ENCODE measurements at regions of chr18 and their contacts with region 1.

Region 1: GRCh38 chr18:36572135-36572856 is 256.5 kb downstream of the TPGS2 start:
- DNase-seq: peak in 1 of 3 donors; percentile 82
- ATAC-seq: peak; percentile 69
- H3K4me3 ChIP-seq: no peak overlapping the region
- H3K4me1 ChIP-seq: peaks cover 4% of the 10 kb centered on the region
- CTCF ChIP-seq: no peak

Region 2: DNA sequence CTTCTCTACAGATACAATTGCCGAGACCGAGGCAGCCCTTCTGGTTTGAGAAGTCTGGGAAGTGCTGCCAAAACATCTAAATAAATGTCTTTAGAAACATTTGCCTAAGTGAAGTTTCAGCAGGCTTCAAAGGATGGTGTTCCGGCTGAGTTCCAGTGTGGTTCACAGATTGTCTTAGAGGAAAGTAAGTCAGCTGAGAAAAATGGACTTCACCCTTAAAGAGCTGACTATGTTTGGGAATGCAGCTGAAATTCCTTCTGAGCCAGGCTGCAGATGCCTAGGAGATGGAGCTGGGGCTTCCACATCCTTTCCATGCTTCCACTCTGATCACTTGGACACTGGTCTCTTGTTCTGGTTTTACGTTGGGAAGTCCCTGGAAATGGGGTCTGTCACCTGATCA is 191.2 kb before region 1 on chr18:
- intact Hi-C with region 1: no loop called
- DNase-seq: no peak
- ATAC-seq: no peak
- H3K4me3 ChIP-seq: no peak overlapping the region
- H3K4me1 ChIP-seq: no peaks in the 10 kb centered on the region
- CTCF ChIP-seq: no peak

Region 3: GRCh38 chr18:36661999-36662398 is 89.7 kb after region 1 on chr18:
- intact Hi-C with region 1: loop called in 1 of 2 experiments (anchors 10 kb)
- DNase-seq: peak in 1 of 3 donors; percentile 24
- ATAC-seq: peak; percentile 28
- H3K4me3 ChIP-seq: no peak overlapping the region
- H3K4me1 ChIP-seq: no peaks in the 10 kb centered on the region
- CTCF ChIP-seq: no peak

Measured in mucosa of descending colon (tissue), 3 donors.